ENCODE measurements at regions of chr3 and their contacts with region 1.

Region 1: DNA sequence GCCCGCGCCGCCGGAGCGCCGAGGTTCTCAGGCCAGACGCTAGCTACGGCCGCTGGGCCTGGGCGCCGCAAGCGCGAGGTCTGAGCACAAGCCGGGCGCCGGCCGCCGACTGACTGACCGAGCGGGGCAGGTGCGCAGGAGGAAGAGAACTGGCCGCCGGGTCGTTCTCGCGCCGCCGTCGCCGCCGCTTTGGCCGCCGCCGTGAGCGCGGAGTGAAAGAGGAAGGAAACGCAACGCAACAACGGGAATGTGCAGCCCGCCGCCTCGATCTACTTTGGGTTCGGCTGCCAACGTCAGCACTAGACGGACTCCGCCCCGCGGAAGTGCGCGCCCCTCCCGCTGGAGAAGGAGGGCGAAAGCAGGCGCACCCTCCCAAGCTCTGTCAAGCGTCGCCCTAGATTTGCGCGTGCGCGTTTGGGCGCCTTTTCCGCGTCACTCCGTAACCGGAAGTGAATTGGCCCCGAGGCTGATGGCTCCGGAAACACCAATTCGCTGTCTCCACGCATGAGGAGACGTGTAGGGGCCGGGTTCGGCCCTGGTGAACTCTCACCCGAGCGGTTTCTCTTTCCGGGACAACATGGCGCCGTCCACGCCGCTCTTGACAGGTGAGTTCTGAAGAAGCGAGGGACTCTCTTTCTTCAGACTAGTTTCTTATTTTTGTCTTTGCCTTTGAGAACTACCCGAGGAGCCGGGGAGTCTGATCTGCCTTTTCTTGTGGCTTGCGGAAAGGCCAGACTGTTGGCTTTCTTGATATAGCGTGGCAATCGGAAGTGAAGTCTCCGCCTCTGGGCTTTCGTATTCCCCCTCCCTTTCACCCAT is at the starts of genes EIF2A and SERP1:
- DNase-seq: peak; percentile 98
- ATAC-seq: peak; percentile 91
- H3K4me3 Mint-ChIP-seq: peak within 1 kb of the TSS; percentile 95
- H3K27ac Mint-ChIP-seq: peak within 1 kb of the TSS; percentile 99
- H3K4me1 Mint-ChIP-seq: peaks cover 59% of the 10 kb centered on the region
- H3K27me3 Mint-ChIP-seq: no peaks in the 10 kb centered on the region
- CTCF ChIP-seq: no peak
- total RNA-seq, gene EIF2A: 130 to 136 TPM
- total RNA-seq, gene SERP1: 115 TPM

Region 2: GRCh38 chr3:150528354-150528797 is 18.1 kb before region 1 on chr3:
- CTCF ChIA-PET with region 1: interaction called, 13 read pairs
- POLR2A ChIA-PET with region 1: interaction called, 12 read pairs
- intact Hi-C with region 1: no loop called
- DNase-seq: no peak
- ATAC-seq: peak; percentile 28
- H3K4me3 Mint-ChIP-seq: no peak overlapping the region
- H3K27ac Mint-ChIP-seq: no peak overlapping the region
- H3K4me1 Mint-ChIP-seq: peaks cover 8% of the 10 kb centered on the region
- H3K27me3 Mint-ChIP-seq: no peaks in the 10 kb centered on the region
- CTCF ChIP-seq: peak; percentile 59

Region 3: GRCh38 chr3:150535204-150535603 is 11.2 kb before region 1 on chr3:
- CTCF ChIA-PET with region 1: interaction called, 13 read pairs
- POLR2A ChIA-PET with region 1: interaction called, 12 read pairs
- intact Hi-C with region 1: no loop called
- DNase-seq: no peak
- ATAC-seq: no peak
- H3K4me3 Mint-ChIP-seq: no peak overlapping the region
- H3K27ac Mint-ChIP-seq: no peak overlapping the region
- H3K4me1 Mint-ChIP-seq: peaks cover 8% of the 10 kb centered on the region
- H3K27me3 Mint-ChIP-seq: no peaks in the 10 kb centered on the region
- CTCF ChIP-seq: no peak

Region 4: GRCh38 chr3:150603153-150603979 is 56.9 kb after region 1 on chr3 and contains the start of gene SELENOT:
- CTCF ChIA-PET with region 1: interaction called, 3 read pairs
- POLR2A ChIA-PET with region 1: interaction called, 17 read pairs
- intact Hi-C with region 1: loop called (anchors 2 kb)
- DNase-seq: peak; percentile 92
- ATAC-seq: peak; percentile 90
- H3K4me3 Mint-ChIP-seq: peak within 1 kb of the TSS; percentile 91
- H3K27ac Mint-ChIP-seq: peak within 1 kb of the TSS; percentile 97
- H3K4me1 Mint-ChIP-seq: peaks cover 58% of the 10 kb centered on the region
- H3K27me3 Mint-ChIP-seq: no peaks in the 10 kb centered on the region
- CTCF ChIP-seq: peak; percentile 32
- total RNA-seq, gene SELENOT: 77.6 to 89.8 TPM

Region 5: DNA sequence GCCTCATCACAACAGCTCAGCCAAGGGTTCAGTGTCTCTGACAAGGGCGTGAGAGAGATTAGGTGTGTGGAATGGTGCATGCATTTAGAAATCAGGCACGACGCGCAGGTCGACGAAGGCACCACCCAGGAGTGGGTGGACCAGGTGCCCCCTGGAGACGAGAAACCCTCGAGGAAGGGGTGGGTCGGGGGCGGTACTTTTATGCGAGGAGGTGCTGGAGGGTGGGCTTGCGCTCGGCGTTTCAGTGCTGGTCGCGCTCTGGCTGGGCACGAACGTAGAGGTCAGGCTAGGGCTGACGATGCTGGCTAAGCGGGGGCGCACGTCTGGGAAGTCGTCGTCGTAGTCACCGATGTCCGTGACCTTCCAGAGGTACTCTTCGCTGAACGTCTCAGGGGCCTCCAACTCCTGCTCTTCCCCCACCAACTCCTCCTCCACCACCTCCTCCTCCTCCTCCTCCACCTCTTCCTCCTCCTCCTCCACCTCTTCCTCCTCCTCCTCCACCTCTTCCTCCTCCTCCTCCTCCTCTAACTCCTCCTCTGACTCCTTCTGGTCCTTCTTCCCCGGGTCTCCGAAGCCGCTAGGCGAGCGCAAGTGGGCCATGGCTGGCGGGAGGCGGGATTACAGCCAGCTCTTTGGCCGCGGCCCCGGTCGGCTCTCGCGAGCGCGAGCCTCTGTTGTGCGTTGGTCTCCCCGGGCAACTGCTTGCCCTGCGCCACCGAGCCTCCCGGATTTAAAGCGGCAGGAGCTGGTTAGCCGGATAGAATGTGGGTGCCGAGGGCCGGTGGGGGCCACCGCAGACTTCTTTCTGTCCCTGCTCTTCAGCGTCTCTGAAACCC is 157.1 kb after region 1 on chr3 and contains the start of gene ERICH6:
- CTCF ChIA-PET with region 1: interaction called, 3 read pairs
- POLR2A ChIA-PET with region 1: interaction called, 3 read pairs
- intact Hi-C with region 1: loop called (anchors 10 kb)
- DNase-seq: peak; percentile 92
- ATAC-seq: peak; percentile 96
- H3K4me3 Mint-ChIP-seq: peak within 1 kb of the TSS; percentile 91
- H3K27ac Mint-ChIP-seq: peak within 1 kb of the TSS; percentile 96
- H3K4me1 Mint-ChIP-seq: peaks cover 37% of the 10 kb centered on the region
- H3K27me3 Mint-ChIP-seq: no peaks in the 10 kb centered on the region
- CTCF ChIP-seq: peak; percentile 10
- total RNA-seq, gene ERICH6: not detected

Measured in activated CD8-positive, alpha-beta T cell treated with anti-CD3 and anti-CD28 coated beads for 36 hours (primary cell).